Heart left ventricle (tissue), 16 donors: ENCODE measurements at regions of chr10 and their contacts with region 1.

Region 1: GRCh38 chr10:122044045-122044661 is 55.2 kb downstream of the TACC2 start:
- DNase-seq: peak in 4 of 5 donors; percentile 35 to 61 (median 52)
- ATAC-seq: peak; percentile 78 to 87 (median 84)
- H3K4me3 ChIP-seq: peak overlapping the region in 1 of 12 donors; percentile 3
- H3K27ac ChIP-seq: peak overlapping the region; percentile 12 to 88 (median 64)
- H3K4me1 ChIP-seq: peaks cover 0 to 46% (median 18%) of the 10 kb centered on the region in 12 donors
- H3K27me3 ChIP-seq: no peaks in the 10 kb centered on the region
- CTCF ChIP-seq: no peak
- POLR2A ChIP-seq: no peak

Region 2: DNA sequence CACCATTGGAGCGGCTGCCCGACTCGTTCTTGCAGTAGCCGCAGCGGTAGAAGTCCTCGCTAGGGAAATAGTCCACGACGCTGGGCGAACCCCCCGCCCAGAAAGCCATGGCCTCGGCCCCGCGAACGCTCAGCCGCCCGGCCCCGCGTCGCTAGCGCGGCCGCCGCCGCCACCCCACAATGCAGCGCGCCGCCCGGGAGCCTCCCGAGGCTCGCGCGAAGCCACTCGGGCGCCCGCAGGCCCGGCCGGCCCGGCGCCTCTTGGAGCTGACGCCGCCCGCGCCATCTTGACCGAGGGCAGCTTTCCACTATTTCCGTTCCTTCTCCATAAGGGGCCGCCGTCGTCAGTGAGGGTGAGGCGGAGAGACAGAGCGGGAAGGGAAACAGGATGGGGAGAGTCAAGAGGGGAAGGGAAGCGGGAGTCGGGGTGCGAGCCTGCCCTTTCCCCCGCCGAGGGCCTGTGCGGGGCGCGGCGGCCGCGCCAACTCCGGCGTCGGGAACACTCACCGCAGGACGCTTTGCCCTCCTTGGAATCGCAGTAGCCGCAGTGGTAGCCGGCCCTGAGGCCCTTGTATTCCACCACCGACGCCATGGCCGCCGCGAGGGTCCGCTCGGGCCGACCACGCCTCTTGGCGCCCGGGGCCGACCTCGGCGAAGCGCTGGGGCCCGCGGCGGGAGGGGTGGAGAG is 116.2 kb before region 1 on chr10 and contains the start of gene ATE1:
- intact Hi-C with region 1: loop called in 1 of 10 experiments (anchors 5 kb)
- DNase-seq: peak; percentile 92 to 95 (median 94)
- ATAC-seq: peak; percentile 91 to 98 (median 96)
- H3K4me3 ChIP-seq: peak within 1 kb of the TSS; percentile 82 to 100 (median 94)
- H3K27ac ChIP-seq: peak within 1 kb of the TSS; percentile 90 to 100 (median 98)
- H3K4me1 ChIP-seq: peaks cover 0 to 41% (median 18%) of the 10 kb centered on the region in 12 donors
- H3K27me3 ChIP-seq: no peaks in the 10 kb centered on the region
- CTCF ChIP-seq: peak in 6 of 12 donors; percentile 10 to 46 (median 26)
- POLR2A ChIP-seq: peak in 1 of 2 donors; percentile 73
- total RNA-seq, gene ATE1: 30.3 to 50.1 (median 40.4) TPM

Region 3: DNA sequence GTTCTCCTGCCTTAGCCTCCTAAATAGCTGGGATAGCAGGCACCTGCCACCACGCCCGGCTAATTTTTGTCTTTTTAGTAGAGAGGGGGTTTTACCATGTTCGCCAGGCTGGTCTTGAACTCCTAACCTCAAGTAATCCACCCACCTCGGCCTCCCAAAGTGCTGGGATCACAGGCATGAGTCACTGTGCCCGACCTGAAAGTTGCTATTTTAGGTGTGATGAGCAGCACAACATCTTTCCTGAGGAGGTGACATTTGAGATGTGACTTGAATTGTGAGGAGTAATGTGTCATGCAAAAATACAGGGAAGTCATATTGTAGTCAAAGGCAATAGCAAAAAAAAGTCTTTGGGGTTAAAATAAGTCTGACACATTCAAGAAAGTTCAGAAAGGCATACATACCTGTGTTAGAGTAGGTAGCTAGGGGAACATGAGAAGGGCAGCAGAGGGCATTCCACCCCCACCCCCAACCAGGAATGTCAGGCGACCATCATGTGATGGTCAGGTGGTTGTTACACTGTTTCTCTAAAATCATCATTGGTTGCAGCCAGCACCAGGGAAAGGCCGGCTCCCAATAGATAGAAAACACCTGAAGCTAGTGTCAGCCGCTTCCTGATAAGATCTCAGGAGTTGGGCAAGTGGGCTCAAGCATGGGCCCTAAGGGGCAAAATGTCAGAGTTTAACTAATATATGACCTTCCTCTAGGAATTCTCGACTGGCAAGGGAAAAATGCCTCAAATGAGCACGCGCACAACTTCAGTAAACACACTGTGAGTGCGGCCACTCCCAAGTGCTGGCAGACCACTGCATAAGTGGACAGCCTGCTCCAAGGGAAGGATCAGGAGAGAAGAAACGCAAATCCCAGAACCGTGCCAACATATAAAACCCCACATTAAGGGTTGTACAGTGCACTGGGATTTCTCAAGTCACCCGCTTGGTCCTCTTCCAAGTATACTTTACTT is 55.5 kb before region 1 on chr10 and contains the start of gene TACC2:
- intact Hi-C with region 1: loop called in 1 of 10 experiments (anchors 5 kb)
- DNase-seq: no peak
- ATAC-seq: peak in 1 of 4 donors; percentile 66
- H3K4me3 ChIP-seq: no peak within 1 kb of the TSS
- H3K27ac ChIP-seq: peak within 1 kb of the TSS in 8 of 12 donors; percentile 2 to 85 (median 46)
- H3K4me1 ChIP-seq: peaks cover 0 to 16% (median 10%) of the 10 kb centered on the region in 12 donors
- H3K27me3 ChIP-seq: no peaks in the 10 kb centered on the region
- CTCF ChIP-seq: no peak
- POLR2A ChIP-seq: no peak
- total RNA-seq, gene TACC2: 225 to 456 (median 334) TPM

Region 4: DNA sequence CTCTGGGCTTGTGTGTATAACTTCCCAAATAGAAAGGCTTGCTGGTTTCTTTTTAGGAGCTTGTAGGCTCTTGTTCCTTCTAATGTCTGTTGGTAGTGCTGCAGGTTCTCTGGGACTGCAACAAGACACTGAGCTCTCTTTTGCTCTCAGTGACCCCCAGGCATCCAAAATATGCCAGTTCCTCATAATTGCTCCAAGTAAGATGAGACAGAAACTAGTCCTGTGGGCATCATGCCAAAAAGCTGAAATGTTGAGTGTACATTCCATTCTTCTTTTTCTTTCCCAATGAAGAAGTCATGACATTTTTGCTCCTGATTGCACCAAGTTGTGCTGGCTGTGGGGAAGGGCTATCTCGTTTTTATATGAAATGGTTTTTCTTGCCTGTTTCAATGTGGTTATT is 219.8 kb after region 1 on chr10:
- intact Hi-C with region 1: no loop called
- DNase-seq: no peak
- ATAC-seq: no peak
- H3K4me3 ChIP-seq: no peak overlapping the region
- H3K27ac ChIP-seq: peak overlapping the region in 2 of 12 donors; percentile 6 to 34
- H3K4me1 ChIP-seq: peaks cover 0 to 35% (median 9%) of the 10 kb centered on the region in 12 donors
- H3K27me3 ChIP-seq: no peaks in the 10 kb centered on the region
- CTCF ChIP-seq: no peak
- POLR2A ChIP-seq: no peak